Activated CD8-positive, alpha-beta memory T cell treated with anti-CD3 and anti-CD28 coated beads, Interleukin-2, amount 10 ng/mL, durations not matched to agents 7 days and 5 days (primary cell): ENCODE measurements at regions of chr7 and their contacts with region 1.

Region 1: GRCh38 chr7:105652359-105652993 is 71.2 kb upstream of the EFCAB10 start:
- DNase-seq: peak; percentile 74
- ATAC-seq: peak; percentile 87
- H3K4me3 Mint-ChIP-seq: no peak overlapping the region
- H3K27ac Mint-ChIP-seq: no peak overlapping the region
- H3K4me1 Mint-ChIP-seq: peaks cover 16% of the 10 kb centered on the region
- H3K27me3 Mint-ChIP-seq: no peaks in the 10 kb centered on the region

Region 2: GRCh38 chr7:105399043-105399725 is 253.3 kb before region 1 on chr7:
- CTCF ChIA-PET with region 1: no interaction called
- DNase-seq: no peak
- ATAC-seq: no peak
- H3K4me3 Mint-ChIP-seq: no peak overlapping the region
- H3K27ac Mint-ChIP-seq: no peak overlapping the region
- H3K4me1 Mint-ChIP-seq: peaks cover 3% of the 10 kb centered on the region
- H3K27me3 Mint-ChIP-seq: no peaks in the 10 kb centered on the region

Region 3: GRCh38 chr7:105639677-105640417 is 12.6 kb before region 1 on chr7:
- CTCF ChIA-PET with region 1: interaction called, 12 read pairs
- DNase-seq: no peak
- ATAC-seq: no peak
- H3K4me3 Mint-ChIP-seq: no peak overlapping the region
- H3K27ac Mint-ChIP-seq: no peak overlapping the region
- H3K4me1 Mint-ChIP-seq: no peaks in the 10 kb centered on the region
- H3K27me3 Mint-ChIP-seq: no peaks in the 10 kb centered on the region

Region 4: GRCh38 chr7:105677817-105678585 is 25.5 kb after region 1 on chr7:
- CTCF ChIA-PET with region 1: interaction called, 44 read pairs
- DNase-seq: peak; percentile 90
- ATAC-seq: peak; percentile 98
- H3K4me3 Mint-ChIP-seq: peak overlapping the region; percentile 70
- H3K27ac Mint-ChIP-seq: peak overlapping the region; percentile 83
- H3K4me1 Mint-ChIP-seq: peaks cover 55% of the 10 kb centered on the region
- H3K27me3 Mint-ChIP-seq: peaks cover 3% of the 10 kb centered on the region

Region 5: DNA sequence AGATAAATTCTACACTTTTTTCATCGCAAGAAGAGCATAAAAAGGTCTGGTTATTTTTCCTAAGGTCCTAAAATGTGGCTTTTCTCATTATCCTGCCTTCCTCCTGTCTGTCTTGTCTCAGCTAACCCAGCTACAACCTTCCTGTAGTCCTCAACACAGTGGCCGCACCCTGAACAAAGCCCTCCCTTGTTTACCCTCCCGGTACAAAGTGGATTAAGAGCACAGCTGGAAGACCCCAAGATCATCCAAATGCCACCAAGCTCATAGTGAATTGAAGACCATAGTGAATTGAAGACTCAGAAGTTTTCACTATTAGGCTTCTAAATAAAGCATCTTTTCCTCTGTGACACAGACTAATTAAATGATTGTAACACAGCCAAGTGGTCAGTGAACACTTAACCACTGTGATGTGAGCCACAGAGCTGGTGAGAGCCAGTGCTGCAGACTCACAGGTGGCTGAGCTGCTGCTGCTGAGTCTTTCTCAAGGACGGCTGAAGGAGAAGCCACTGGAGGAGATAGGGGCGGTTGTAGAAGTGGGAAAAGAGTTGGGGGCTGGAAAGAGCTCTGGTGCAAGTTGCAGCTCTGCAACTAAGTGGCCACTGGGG is 100.3 kb after region 1 on chr7:
- CTCF ChIA-PET with region 1: interaction called, 10 read pairs
- DNase-seq: no peak
- ATAC-seq: no peak
- H3K4me3 Mint-ChIP-seq: no peak overlapping the region
- H3K27ac Mint-ChIP-seq: no peak overlapping the region
- H3K4me1 Mint-ChIP-seq: no peaks in the 10 kb centered on the region
- H3K27me3 Mint-ChIP-seq: peaks cover 15% of the 10 kb centered on the region

Region 6: DNA sequence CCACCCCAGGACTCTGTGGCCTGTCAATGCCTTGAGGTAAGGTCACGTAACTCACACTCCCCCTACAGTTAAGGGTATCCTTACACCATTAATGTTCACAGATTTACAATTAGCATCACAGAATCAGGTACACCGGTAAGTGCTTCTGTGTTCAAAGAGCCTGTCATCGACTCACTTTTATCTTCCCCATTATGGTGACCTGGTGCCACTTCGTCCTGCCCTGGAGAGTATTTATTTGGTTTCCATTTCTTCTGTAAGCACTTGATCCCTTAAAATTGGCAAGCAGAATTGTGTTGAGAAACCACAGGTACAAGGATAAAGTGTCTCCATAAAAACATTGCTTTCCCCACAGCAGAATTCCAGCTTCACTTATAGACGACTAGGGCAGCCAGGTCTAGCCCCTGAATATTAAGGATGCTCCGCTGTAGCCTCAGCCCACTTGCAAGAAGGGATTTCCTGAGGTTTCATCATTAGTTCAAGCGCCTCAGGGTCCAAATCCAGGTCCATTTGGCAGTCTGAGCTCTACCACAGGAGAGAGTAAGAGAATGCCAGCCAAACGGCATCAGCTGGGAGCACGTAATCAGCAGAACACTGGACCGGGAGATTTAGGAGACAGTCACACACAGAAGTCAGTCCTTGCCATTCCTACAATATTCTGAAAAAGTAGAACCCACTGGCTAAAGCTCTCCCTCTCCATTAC is 213.8 kb after region 1 on chr7:
- CTCF ChIA-PET with region 1: no interaction called
- DNase-seq: no peak
- ATAC-seq: no peak
- H3K4me3 Mint-ChIP-seq: no peak overlapping the region
- H3K27ac Mint-ChIP-seq: no peak overlapping the region
- H3K4me1 Mint-ChIP-seq: no peaks in the 10 kb centered on the region
- H3K27me3 Mint-ChIP-seq: no peaks in the 10 kb centered on the region

Region 7: GRCh38 chr7:106041140-106041717 is 388.8 kb after region 1 on chr7:
- CTCF ChIA-PET with region 1: interaction called, 18 read pairs
- DNase-seq: peak; percentile 42
- ATAC-seq: peak; percentile 29
- H3K4me3 Mint-ChIP-seq: no peak overlapping the region
- H3K27ac Mint-ChIP-seq: no peak overlapping the region
- H3K4me1 Mint-ChIP-seq: no peaks in the 10 kb centered on the region
- H3K27me3 Mint-ChIP-seq: peaks cover 34% of the 10 kb centered on the region

Region 8: DNA sequence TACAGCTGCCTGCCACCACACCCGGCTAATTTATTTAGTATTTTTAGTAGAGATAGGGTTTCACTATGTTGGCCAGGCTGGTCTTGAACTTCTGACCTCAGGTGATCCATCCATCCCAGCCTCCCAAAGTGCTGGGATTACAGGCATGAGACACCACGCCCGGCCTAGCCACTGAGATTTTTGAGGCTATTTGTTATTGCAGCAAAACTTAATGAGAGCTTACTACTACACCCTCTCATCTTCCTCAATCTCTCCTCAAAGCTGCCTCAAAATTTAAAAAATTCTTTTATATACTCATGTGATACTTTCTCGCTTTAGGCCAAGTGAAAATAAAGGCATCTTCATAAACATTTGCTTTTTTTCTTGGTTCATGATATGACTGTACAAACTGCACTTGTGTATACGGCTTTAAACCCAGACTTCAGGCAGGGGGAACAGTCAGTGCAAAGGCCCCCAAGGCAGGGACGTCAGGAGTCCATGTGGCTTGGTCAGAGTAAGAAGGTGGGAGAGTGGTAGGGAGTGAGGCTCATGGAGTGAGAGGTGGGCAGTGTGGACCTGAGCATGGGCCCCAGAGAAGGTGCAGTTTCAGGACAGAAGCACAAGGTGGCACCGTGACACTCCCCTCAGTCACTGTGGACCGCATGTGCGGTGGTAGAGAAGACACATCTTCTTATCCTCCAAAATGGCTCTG is 404.2 kb after region 1 on chr7:
- CTCF ChIA-PET with region 1: no interaction called
- DNase-seq: peak; percentile 81
- ATAC-seq: peak; percentile 99
- H3K4me3 Mint-ChIP-seq: no peak overlapping the region
- H3K27ac Mint-ChIP-seq: peak overlapping the region; percentile 35
- H3K4me1 Mint-ChIP-seq: peaks cover 28% of the 10 kb centered on the region
- H3K27me3 Mint-ChIP-seq: peaks cover 20% of the 10 kb centered on the region